ENCODE measurements at regions of chr1 and their contacts with region 1.

Region 1: DNA sequence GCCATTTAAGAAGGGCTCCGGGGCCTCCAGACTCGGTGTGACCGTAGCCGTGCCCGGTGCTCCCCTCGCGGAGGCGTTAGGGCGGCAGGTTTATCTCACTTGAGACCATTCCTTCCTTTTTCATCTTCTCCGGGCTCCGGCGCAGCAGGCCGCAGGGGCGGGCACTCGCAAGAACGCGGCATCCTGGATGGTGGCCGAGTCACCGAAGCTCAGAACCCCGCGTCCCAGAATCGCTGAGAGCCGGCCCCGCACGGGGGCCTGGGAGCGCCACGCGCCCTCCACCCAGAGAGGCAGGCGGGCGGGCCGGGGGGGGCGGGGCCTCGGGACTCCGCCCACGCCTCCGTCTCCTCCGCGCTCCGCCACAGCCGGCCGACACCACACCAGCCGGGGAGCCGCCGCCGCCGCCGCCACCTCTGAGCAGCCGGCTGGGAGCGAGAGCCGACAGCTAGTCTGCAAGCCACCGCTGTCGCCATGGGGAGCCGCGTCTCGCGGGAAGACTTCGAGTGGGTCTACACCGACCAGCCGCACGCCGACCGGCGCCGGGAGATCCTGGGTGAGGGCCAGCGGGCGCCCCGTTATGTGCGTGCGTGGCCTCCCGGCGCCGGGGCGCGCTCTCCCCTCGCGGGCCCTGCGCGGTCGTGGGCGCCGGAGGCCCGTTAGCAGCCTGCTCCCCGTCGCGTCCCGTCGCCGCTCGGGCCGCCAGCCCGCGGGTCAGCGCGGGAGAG is at the start of gene DEGS1:
- DNase-seq: peak; percentile 92
- H3K4me3 ChIP-seq: peak within 1 kb of the TSS; percentile 75
- H3K27ac ChIP-seq: peak within 1 kb of the TSS; percentile 96
- H3K4me1 ChIP-seq: peaks cover 41% of the 10 kb centered on the region
- CTCF ChIP-seq: no peak
- total RNA-seq, gene DEGS1: 28.7 and 34.8 TPM in 2 replicates

Region 2: GRCh38 chr1:223845810-223846682 is 337.0 kb before region 1 on chr1 and contains the start of gene TP53BP2:
- CTCF ChIA-PET with region 1: no interaction called
- POLR2A ChIA-PET with region 1: no interaction called
- intact Hi-C with region 1: loop called (anchors 10 kb)
- DNase-seq: peak; percentile 85
- H3K4me3 ChIP-seq: peak within 1 kb of the TSS; percentile 80
- H3K27ac ChIP-seq: peak within 1 kb of the TSS; percentile 67
- H3K4me1 ChIP-seq: peaks cover 26% of the 10 kb centered on the region
- CTCF ChIP-seq: peak; percentile 69
- total RNA-seq, gene TP53BP2: 19.7 and 21.7 TPM in 2 replicates

Region 3: DNA sequence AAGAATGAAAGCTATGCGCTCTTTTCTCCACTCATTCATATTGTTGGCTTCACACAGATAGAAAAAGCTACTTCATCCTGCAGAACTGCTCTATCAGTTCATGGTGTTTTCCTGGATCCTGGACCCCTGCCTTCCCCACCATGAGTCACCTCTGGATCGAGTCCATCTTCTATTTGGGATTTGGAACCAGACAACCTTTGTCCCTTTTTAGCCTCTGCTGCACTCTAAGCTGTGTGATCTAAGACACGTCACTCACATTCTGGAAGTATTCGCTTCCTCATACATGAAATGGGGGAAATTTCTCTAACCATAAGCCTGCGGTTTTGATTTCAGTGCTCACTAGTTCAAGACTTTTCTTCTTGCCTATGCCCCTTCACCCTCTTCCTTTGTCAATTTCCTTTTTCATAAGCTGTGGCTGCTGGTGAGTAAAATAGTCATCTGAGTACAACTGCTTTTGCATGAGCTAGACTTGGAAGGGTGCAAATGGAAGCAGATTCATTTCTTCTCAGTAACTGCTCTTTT is 14.1 kb before region 1 on chr1:
- CTCF ChIA-PET with region 1: no interaction called
- POLR2A ChIA-PET with region 1: interaction called, 12 read pairs
- intact Hi-C with region 1: no loop called
- DNase-seq: peak; percentile 38
- H3K4me3 ChIP-seq: no peak overlapping the region
- H3K27ac ChIP-seq: no peak overlapping the region
- H3K4me1 ChIP-seq: peaks cover 7% of the 10 kb centered on the region
- CTCF ChIP-seq: no peak

Region 4: GRCh38 chr1:224245188-224245587 is 62.2 kb after region 1 on chr1:
- CTCF ChIA-PET with region 1: no interaction called
- POLR2A ChIA-PET with region 1: interaction called, 7 read pairs
- intact Hi-C with region 1: loop called (anchors 2 kb)
- DNase-seq: peak; percentile 88
- H3K4me3 ChIP-seq: peak overlapping the region; percentile 1
- H3K27ac ChIP-seq: peak overlapping the region; percentile 85
- H3K4me1 ChIP-seq: peaks cover 22% of the 10 kb centered on the region
- CTCF ChIP-seq: peak; percentile 47

Region 5: GRCh38 chr1:224329842-224330753 is 147.1 kb after region 1 on chr1 and contains the start of gene NVL:
- CTCF ChIA-PET with region 1: no interaction called
- POLR2A ChIA-PET with region 1: interaction called, 6 read pairs
- intact Hi-C with region 1: loop called (anchors 1 kb)
- DNase-seq: peak; percentile 93
- H3K4me3 ChIP-seq: peak within 1 kb of the TSS; percentile 95
- H3K27ac ChIP-seq: peak within 1 kb of the TSS; percentile 82
- H3K4me1 ChIP-seq: peaks cover 35% of the 10 kb centered on the region
- CTCF ChIP-seq: no peak
- total RNA-seq, gene NVL: 31.6 and 33.9 TPM in 2 replicates

Measured in OCI-LY7 (cell line).